Left colon (tissue), 2 donors: ENCODE measurements at regions of chr15 and their contacts with region 1.

Region 1: DNA sequence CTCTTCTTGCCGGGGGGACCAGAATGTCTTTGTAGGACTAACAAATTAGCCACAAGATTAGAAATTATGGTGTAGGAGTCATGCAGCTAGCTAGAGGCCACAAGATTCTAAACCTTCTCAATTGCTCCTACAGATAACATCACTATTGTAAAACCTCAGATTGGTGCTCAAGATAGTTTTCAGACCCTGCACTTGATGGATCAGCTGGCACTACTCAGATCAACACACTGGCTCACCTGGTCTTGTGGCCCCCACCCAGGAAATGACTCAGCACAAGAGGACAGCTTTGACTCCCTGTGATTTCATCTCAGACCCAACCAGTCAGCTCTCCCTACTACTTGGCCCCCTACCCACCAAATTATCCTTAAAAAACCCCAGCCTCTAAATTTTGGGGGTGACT is 124.1 kb upstream of the RASGRP1 start:
- DNase-seq: no peak
- ATAC-seq: no peak

Region 2: DNA sequence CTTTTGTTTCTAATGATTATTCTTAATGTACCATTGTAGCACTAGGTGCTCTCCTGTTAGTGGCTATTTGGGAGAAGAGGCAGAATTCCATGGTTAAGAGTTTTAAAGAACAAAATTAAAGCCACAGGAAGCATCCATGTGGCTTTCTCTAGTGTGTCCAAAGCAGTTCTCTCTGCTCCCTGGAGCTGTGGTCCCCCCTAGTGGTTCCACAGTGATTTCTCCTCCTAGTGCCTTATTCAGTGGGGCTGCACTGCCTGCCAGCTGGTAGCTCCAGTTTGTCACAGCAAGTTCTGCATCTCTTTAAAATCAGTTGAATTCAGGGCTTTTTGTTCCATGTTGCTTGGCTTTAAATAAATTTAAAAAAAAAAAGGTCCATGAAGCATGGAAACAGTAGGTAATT is 274.4 kb before region 1 on chr15:
- intact Hi-C with region 1: no loop called
- DNase-seq: peak; percentile 24 to 31
- ATAC-seq: peak; percentile 59

Region 3: GRCh38 chr15:38440353-38441129 is 248.2 kb before region 1 on chr15:
- intact Hi-C with region 1: loop called in 1 of 2 experiments (anchors 5 kb)
- DNase-seq: peak; percentile 21 to 40
- ATAC-seq: peak; percentile 95